H1 (cell line): ENCODE measurements at regions of chr22 and their contacts with region 1.

Region 1: DNA sequence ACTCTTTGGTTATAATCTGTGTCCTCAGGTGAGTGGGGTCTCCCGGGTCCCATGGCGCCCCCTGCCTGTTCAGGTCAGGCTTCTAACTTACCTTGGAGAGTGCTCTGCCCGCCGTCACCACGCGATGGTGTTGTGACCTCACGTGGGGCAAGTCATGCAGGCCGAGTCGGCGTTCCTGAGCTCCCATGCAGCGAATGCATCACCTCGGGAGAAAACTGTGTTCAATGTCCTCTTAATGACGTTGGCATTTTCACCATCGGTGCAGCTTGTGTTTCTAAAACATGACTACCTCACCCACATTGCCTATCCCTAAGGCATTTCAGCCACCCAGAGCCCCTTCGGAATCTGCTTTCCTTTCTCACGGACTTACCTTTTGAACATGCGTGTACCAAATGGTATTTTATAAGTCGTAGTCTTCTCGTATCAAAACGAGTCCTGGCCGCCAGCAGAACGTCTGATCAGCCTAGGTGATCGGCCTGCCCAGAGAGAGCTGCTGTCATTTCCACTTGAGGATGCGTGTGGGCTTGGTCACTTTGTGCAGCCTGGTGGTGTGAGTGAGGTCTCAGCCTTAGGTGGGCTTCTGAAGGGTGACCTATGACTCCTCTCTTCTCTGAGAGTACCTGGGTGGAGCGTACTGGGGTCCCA is 64.8 kb downstream of the TBC1D22A start:
- DNase-seq: peak; percentile 54 to 88
- H3K4me3 ChIP-seq: no peak overlapping the region
- H3K27ac ChIP-seq: no peak overlapping the region
- H3K4me1 ChIP-seq: peaks cover 0 to 8% (median 3%) of the 10 kb centered on the region in 4 experiments; a peak in 3 of 7 replicates
- H3K27me3 ChIP-seq: no peaks in the 10 kb centered on the region; a peak in 1 of 7 replicates
- CTCF ChIP-seq: peak; percentile 96 to 99 (median 99)
- EP300 ChIP-seq: no peak
- POLR2A ChIP-seq: no peak
- RAD21 ChIP-seq: peak; percentile 84 to 86

Region 2: DNA sequence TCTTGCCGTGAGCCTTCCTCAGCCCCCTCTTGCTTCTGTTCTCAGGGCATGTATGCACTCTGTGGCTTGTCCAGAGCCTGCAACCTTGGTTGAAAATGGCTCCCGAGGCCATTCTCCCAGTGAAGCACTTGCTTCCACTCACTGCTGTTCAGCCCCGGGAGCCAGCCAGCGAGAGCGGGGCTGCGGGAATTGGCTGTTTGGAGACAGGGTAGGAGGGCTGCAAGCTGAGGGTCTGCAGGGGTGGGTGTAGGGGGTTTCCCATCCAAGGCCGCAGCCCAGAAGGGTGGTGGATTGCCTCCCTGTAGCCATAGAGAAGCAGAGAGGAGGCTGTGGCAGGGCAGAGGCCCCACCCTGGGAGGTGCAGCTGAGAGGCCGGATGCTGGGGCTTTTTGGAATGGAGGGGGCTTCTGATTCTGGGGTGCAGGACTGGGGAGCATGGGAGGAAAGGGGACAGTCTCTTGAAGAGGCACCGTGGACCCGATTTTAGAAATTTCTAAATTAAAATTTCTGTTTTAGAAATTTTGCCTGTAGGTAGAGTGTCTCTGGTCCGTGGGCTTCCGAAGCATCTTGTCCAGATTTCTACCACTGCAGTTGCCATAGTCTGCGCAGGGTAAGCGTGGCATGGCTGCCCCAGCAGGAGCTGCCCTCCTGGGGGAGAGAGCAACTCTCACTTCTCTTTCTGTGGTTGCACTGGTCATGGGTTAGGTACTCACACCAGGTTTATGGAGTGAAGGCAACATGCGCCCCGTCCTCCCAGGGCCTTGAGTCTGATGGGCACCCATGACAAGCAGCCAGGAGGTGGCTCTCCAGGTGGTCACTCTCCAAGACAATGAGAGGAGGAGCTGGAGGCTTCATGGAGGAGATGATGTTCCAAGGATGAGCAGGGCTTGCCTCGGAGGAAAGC is 35.4 kb after region 1 on chr22:
- CTCF ChIA-PET with region 1: interaction called, 13 read pairs
- POLR2A ChIA-PET with region 1: no interaction called
- DNase-seq: no peak
- H3K4me3 ChIP-seq: no peak overlapping the region
- H3K27ac ChIP-seq: no peak overlapping the region
- H3K4me1 ChIP-seq: 0 out of 7 replicates have a peak, but pooled peaks cover 0 to 7% (median 0%) of the 10 kb centered on the region in 4 experiments
- H3K27me3 ChIP-seq: no peaks in the 10 kb centered on the region
- CTCF ChIP-seq: no peak
- EP300 ChIP-seq: no peak
- POLR2A ChIP-seq: no peak
- RAD21 ChIP-seq: no peak

Region 3: DNA sequence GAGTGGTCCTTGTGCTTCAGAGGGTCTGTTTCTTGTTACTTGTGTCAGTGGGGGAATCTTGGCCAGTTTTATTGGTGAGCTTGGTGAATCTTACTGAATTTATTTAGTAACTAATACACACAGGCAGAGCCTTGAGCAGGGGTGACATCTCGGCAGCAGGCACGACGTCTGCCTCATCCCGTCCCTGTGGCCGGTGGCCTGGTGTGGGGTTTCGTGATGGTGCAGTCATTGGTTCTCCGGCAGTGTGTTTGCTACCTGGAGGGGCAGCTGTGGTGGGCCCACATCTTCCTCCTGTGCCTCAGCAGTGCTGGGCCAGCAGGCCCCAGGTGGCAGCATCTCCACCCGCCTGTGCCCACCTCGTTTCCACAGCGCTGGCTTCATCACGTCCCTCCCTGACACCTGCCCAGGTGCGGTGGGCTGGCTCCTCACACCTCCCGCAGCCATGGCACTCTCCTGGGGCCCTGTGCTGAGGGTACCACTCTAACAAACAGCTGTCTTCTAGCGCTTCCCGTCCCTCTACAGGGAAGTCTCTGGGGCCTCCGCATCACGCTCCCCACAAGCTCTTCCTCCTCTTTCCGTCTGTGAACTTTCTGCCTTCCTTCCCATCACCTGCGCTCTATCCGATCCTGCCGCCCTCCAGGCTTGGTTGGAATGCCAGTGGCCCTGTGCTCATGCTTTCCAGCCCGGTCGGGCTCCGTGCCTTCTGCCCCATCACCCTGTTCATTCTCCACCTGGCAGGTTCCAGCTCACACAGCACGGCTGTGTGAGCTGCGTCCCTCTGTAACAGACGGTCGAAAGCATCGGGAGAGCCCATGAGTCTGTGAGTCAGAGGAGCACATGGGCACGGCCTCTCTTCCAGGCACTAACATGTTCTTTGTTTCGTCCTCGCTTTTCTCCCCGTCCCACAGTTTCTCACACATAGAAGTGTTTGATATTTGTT is 138.6 kb after region 1 on chr22:
- CTCF ChIA-PET with region 1: interaction called, 13 read pairs
- POLR2A ChIA-PET with region 1: no interaction called
- DNase-seq: no peak
- H3K4me3 ChIP-seq: no peak overlapping the region
- H3K27ac ChIP-seq: no peak overlapping the region
- H3K4me1 ChIP-seq: peaks cover 0 to 6% (median 2%) of the 10 kb centered on the region in 4 experiments; a peak in 5 of 7 replicates
- H3K27me3 ChIP-seq: no peaks in the 10 kb centered on the region
- CTCF ChIP-seq: no peak
- EP300 ChIP-seq: no peak
- POLR2A ChIP-seq: no peak
- RAD21 ChIP-seq: no peak